ENCODE measurements at regions of chr9 and their contacts with region 1.

Region 1: GRCh38 chr9:116572095-116572748 is 114.9 kb upstream of the TRIM32 start:
- DNase-seq: peak; percentile 92
- H3K4me3 ChIP-seq: no peak overlapping the region
- H3K27ac ChIP-seq: peak overlapping the region; percentile 37
- H3K4me1 ChIP-seq: peaks cover 55% of the 10 kb centered on the region
- H3K27me3 ChIP-seq: no peaks in the 10 kb centered on the region
- CTCF ChIP-seq: peak; percentile 91

Region 2: DNA sequence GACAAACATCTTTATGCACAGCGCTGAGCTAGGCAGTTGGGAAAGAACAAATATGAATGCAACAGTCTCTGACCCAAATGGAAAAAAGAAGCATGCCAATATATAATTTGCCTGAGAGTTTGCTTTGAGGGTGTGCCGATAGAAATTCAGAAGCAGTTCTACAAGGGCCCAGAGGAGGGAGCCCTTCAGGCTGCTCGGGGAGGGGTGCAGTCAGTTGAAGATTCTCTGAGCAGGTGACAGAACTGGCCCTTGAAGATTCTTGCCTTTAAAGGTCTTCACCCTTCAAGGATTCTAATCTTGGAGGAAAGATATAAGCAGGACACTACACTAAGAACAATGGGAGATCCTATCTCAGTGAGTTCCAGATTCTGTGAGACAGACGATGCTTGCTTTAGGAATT is 422.4 kb before region 1 on chr9:
- intact Hi-C with region 1: loop called (anchors 5 kb)
- DNase-seq: no peak
- H3K4me3 ChIP-seq: no peak overlapping the region
- H3K27ac ChIP-seq: no peak overlapping the region
- H3K4me1 ChIP-seq: peaks cover 9% of the 10 kb centered on the region
- H3K27me3 ChIP-seq: peaks cover 15% of the 10 kb centered on the region
- CTCF ChIP-seq: peak; percentile 79

Region 3: GRCh38 chr9:116230051-116230632 is 342.1 kb before region 1 on chr9:
- intact Hi-C with region 1: no loop called
- DNase-seq: no peak
- H3K4me3 ChIP-seq: no peak overlapping the region
- H3K27ac ChIP-seq: no peak overlapping the region
- H3K4me1 ChIP-seq: peaks cover 6% of the 10 kb centered on the region
- H3K27me3 ChIP-seq: no peaks in the 10 kb centered on the region
- CTCF ChIP-seq: no peak

Region 4: GRCh38 chr9:116420993-116421538 is 151.2 kb before region 1 on chr9:
- intact Hi-C with region 1: no loop called
- DNase-seq: no peak
- H3K4me3 ChIP-seq: no peak overlapping the region
- H3K27ac ChIP-seq: no peak overlapping the region
- H3K4me1 ChIP-seq: no peaks in the 10 kb centered on the region
- H3K27me3 ChIP-seq: no peaks in the 10 kb centered on the region
- CTCF ChIP-seq: no peak

Region 5: DNA sequence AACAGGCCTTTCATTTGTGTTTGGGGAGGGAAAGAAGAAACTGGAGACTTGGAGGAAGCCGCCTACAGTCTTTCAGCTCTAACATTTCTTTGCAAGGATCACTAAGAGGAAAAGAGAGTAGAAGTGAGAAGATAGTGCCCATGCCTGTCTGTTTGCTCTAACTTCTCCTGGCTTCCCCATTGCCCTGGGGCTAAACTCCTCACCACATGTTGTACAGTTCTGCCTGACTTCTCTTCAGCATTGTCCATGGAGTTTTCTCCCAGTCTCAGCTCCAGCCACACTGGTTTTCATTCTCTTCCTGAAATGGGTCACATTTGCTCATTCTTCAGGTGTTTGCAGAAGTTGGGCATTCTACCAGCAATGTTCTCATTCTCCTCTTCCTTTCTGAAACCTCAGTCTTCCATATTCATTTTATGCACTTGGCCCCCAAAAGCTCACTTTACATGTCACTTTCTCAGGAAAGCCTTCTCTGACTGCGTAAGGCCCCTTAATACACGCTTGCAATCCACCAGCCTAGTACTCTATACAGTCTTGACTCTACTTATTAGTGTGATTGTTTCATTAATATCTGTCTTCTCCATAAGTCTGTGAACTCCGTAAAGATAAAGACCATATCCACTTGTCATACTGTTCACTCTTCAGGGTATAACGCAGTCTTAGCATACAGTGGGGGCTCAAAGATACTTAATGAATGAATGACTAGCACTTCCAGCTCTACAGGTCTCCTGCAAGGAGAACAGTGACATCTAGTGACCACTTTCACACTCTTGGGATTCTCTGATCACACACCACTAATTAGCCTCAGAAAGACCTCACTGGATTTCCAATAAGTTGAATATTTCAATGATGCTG is 74.7 kb after region 1 on chr9:
- intact Hi-C with region 1: loop called (anchors 10 kb)
- DNase-seq: no peak
- H3K4me3 ChIP-seq: no peak overlapping the region
- H3K27ac ChIP-seq: peak overlapping the region; percentile 86
- H3K4me1 ChIP-seq: peaks cover 27% of the 10 kb centered on the region
- H3K27me3 ChIP-seq: no peaks in the 10 kb centered on the region
- CTCF ChIP-seq: peak; percentile 62

Region 6: DNA sequence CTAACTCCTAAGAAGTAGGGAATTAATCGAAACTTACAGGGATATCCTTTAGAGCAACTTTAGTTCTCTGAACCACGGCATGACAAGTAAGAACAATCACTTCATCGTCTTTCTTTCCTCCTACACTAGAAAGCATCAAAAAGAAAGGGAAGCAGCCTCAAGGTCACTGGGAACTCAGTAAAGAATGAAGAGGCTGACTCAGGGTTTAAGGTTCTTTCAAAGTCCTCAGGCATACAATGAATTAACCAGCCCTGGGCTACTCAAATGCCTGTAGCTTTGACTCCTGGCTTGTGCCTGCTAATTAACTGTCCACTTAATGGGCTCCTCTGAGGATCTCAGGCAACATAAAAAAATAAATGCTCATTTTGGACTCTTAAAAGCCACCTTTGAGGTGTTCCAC is 216.9 kb after region 1 on chr9:
- intact Hi-C with region 1: no loop called
- DNase-seq: no peak
- H3K4me3 ChIP-seq: no peak overlapping the region
- H3K27ac ChIP-seq: no peak overlapping the region
- H3K4me1 ChIP-seq: no peaks in the 10 kb centered on the region
- H3K27me3 ChIP-seq: peaks cover 42% of the 10 kb centered on the region
- CTCF ChIP-seq: no peak